ENCODE measurements at regions of chr1 and their contacts with region 1.

Region 1: GRCh38 chr1:45521398-45522323 is at the start of gene PRDX1:
- DNase-seq: peak; percentile 75
- H3K4me3 ChIP-seq: peak within 1 kb of the TSS; percentile 71
- H3K27me3 ChIP-seq: no peaks in the 10 kb centered on the region
- CTCF ChIP-seq: peak; percentile 33; the same call in 1 of the 2 replicates
- polyA plus RNA-seq, gene PRDX1: 414 and 752 TPM in 2 replicates

Region 2: GRCh38 chr1:44962729-44963128 is 558.9 kb before region 1 on chr1:
- CTCF ChIA-PET with region 1: no interaction called
- POLR2A ChIA-PET with region 1: interaction called, 26 read pairs
- DNase-seq: no peak
- H3K4me3 ChIP-seq: no peak overlapping the region
- H3K27me3 ChIP-seq: no peaks in the 10 kb centered on the region
- CTCF ChIP-seq: no peak

Region 3: DNA sequence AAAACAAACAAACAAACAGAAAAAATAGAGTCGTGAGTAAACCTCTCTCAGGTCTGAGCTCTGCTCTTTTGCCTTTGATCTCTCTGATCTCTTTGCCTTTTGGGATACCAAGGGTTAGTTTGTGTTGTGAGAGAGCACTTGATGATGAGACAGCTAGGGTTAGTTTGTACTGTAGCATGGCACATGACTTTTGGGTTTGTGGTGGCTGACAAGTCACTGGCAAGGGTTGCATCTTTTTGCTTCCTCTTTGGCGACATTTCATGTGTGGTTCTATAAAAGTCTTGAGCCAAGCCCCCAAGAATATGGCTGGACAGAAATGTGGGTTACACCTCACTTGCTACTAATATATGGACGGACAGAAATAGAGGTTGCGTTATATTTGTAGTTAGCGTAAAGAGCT is 91.2 kb before region 1 on chr1:
- CTCF ChIA-PET with region 1: no interaction called
- POLR2A ChIA-PET with region 1: no interaction called
- DNase-seq: no peak
- H3K4me3 ChIP-seq: no peak overlapping the region
- H3K27me3 ChIP-seq: no peaks in the 10 kb centered on the region
- CTCF ChIP-seq: no peak

Region 4: GRCh38 chr1:45550401-45551351 is 29.0 kb after region 1 on chr1 and contains the start of gene AKR1A1:
- CTCF ChIA-PET with region 1: interaction called, 5 read pairs
- POLR2A ChIA-PET with region 1: interaction called, 13 read pairs
- DNase-seq: peak; percentile 34
- H3K4me3 ChIP-seq: peak within 1 kb of the TSS; percentile 52
- H3K27me3 ChIP-seq: no peaks in the 10 kb centered on the region
- CTCF ChIP-seq: no peak
- polyA plus RNA-seq, gene AKR1A1: 161 and 188 TPM in 2 replicates

Region 5: GRCh38 chr1:45669859-45670655 is 148.4 kb after region 1 on chr1:
- CTCF ChIA-PET with region 1: no interaction called
- POLR2A ChIA-PET with region 1: no interaction called
- DNase-seq: no peak
- H3K4me3 ChIP-seq: no peak overlapping the region
- H3K27me3 ChIP-seq: no peaks in the 10 kb centered on the region
- CTCF ChIP-seq: no peak

Measured in BJ (cell line).